ENCODE measurements at regions of chr17 and their contacts with region 1.

Region 1: GRCh38 chr17:4004517-4005295 is 40.5 kb upstream of the ATP2A3 start:
- H3K4me3 Mint-ChIP-seq: no peak overlapping the region
- H3K27ac Mint-ChIP-seq: no peak overlapping the region
- H3K4me1 Mint-ChIP-seq: peaks cover 19% of the 10 kb centered on the region
- H3K27me3 Mint-ChIP-seq: peaks cover 20% of the 10 kb centered on the region

Region 2: GRCh38 chr17:3865176-3865575 is 139.5 kb before region 1 on chr17:
- intact Hi-C with region 1: loop called (anchors 10 kb)
- H3K4me3 Mint-ChIP-seq: no peak overlapping the region
- H3K27ac Mint-ChIP-seq: no peak overlapping the region
- H3K4me1 Mint-ChIP-seq: no peaks in the 10 kb centered on the region
- H3K27me3 Mint-ChIP-seq: no peaks in the 10 kb centered on the region

Region 3: GRCh38 chr17:3913531-3914311 is 91.0 kb before region 1 on chr17:
- intact Hi-C with region 1: loop called (anchors 5 kb)
- H3K4me3 Mint-ChIP-seq: peak overlapping the region; percentile 82
- H3K27ac Mint-ChIP-seq: peak overlapping the region; percentile 92
- H3K4me1 Mint-ChIP-seq: peaks cover 88% of the 10 kb centered on the region
- H3K27me3 Mint-ChIP-seq: peaks cover 2% of the 10 kb centered on the region

Region 4: GRCh38 chr17:3935140-3935542 is 69.6 kb before region 1 on chr17:
- intact Hi-C with region 1: loop called (anchors 1 kb)
- H3K4me3 Mint-ChIP-seq: no peak overlapping the region
- H3K27ac Mint-ChIP-seq: no peak overlapping the region
- H3K4me1 Mint-ChIP-seq: no peaks in the 10 kb centered on the region
- H3K27me3 Mint-ChIP-seq: no peaks in the 10 kb centered on the region

Region 5: DNA sequence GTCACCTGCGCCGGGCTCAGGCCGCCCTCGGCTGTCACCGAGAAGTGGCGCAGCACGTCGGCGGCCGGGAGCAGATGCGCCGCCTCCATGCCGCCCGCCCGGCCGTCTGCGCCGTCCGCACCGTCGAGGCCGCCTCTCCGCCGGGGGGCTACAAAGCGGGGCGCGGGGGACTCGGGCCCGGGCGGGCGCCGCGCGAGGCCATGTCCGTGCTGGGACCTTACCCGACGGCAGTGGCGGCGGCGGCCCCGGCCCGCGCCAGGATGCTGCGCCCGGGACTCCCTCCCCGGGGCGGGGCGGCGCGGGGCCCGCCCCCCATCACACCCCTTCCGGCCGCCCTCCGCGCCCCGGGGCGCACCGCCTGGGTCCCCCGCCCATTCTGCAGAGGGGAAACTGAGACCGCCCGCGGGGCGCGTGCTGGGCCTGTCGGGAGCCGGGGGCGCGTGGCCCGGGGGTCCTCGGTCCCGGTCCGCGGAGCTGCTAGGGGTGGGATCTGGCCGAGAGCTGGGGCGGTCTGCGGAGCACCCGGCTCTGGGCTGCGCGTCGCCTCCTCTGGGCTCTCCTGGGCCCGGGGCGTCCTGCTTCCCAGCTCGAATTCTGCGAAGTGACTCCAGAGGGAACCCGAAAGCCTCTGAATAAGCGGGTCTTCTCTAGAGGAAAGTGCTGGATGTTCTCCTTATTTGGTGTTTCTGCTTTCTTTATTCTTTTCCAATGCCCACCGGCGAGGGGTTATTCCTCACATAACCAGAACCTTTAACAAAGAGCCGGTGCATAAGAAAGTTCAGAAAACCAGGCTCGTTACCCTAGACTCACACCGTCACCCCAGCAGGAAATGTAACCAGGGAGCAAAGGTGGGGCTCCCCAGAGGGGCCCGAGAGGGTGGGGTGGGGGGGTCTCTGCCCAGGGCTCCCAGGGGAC is 40.2 kb before region 1 on chr17 and contains the start of gene ATP2A3:
- intact Hi-C with region 1: loop called (anchors 5 kb)
- H3K4me3 Mint-ChIP-seq: peak within 1 kb of the TSS; percentile 81
- H3K27ac Mint-ChIP-seq: peak within 1 kb of the TSS; percentile 73
- H3K4me1 Mint-ChIP-seq: peaks cover 48% of the 10 kb centered on the region
- H3K27me3 Mint-ChIP-seq: peaks cover 7% of the 10 kb centered on the region

Measured in dendritic cell treated with granulocyte-macrophage colony-stimulating factor and Interleukin-4, amounts not matched to agents 40 ng/mL and 50 ng/mL, for 4 days (primary cell).